ENCODE measurements at regions of chr16 and their contacts with region 1.

Region 1: GRCh38 chr16:3134564-3135417 is at the start of gene ZNF213:
- DNase-seq: peak; percentile 92 to 98 (median 96)
- H3K4me3 ChIP-seq: peak within 1 kb of the TSS; percentile 89 to 97
- H3K4me3 Mint-ChIP-seq: peak within 1 kb of the TSS; percentile 93 to 99 (median 98)
- H3K27ac ChIP-seq: peak within 1 kb of the TSS; percentile 93
- H3K27ac Mint-ChIP-seq: peak within 1 kb of the TSS; percentile 94 to 99 (median 99)
- H3K4me1 ChIP-seq: peaks cover 28% of the 10 kb centered on the region
- H3K4me1 Mint-ChIP-seq: peaks cover 12 to 44% (median 23%) of the 10 kb centered on the region in 4 donors
- H3K27me3 ChIP-seq: no peaks in the 10 kb centered on the region
- H3K27me3 Mint-ChIP-seq: no peaks in the 10 kb centered on the region
- total RNA-seq, gene ZNF213: 14.1 to 14.5 TPM

Region 2: DNA sequence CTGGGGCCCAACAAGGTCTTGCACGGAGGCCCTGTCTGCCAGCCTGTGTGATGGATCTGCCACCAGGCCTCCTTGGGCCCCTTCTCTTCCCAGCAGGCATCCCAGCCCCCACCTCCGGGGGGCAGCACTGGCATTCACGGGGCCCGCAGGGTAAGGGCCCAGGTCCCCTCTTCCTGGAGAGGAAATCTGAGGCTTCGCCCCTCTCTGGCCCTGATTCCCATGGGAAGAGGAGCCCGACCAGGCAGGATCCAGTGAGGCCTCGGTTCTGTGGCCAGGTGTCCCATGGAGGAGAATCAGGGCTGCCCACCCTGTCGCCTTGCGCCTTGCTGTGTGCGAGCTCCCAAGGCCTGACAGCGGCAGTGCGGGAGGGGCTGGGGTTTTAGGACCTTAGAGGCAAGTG is 548.5 kb before region 1 on chr16:
- CTCF ChIA-PET with region 1: no interaction called
- POLR2A ChIA-PET with region 1: no interaction called
- intact Hi-C with region 1: no loop called
- DNase-seq: no peak
- H3K4me3 ChIP-seq: no peak overlapping the region
- H3K4me3 Mint-ChIP-seq: no peak overlapping the region
- H3K27ac ChIP-seq: no peak overlapping the region
- H3K27ac Mint-ChIP-seq: no peak overlapping the region
- H3K4me1 ChIP-seq: no peaks in the 10 kb centered on the region
- H3K4me1 Mint-ChIP-seq: peaks cover 0 to 6% (median 4%) of the 10 kb centered on the region in 4 donors
- H3K27me3 ChIP-seq: no peaks in the 10 kb centered on the region
- H3K27me3 Mint-ChIP-seq: no peaks in the 10 kb centered on the region

Region 3: DNA sequence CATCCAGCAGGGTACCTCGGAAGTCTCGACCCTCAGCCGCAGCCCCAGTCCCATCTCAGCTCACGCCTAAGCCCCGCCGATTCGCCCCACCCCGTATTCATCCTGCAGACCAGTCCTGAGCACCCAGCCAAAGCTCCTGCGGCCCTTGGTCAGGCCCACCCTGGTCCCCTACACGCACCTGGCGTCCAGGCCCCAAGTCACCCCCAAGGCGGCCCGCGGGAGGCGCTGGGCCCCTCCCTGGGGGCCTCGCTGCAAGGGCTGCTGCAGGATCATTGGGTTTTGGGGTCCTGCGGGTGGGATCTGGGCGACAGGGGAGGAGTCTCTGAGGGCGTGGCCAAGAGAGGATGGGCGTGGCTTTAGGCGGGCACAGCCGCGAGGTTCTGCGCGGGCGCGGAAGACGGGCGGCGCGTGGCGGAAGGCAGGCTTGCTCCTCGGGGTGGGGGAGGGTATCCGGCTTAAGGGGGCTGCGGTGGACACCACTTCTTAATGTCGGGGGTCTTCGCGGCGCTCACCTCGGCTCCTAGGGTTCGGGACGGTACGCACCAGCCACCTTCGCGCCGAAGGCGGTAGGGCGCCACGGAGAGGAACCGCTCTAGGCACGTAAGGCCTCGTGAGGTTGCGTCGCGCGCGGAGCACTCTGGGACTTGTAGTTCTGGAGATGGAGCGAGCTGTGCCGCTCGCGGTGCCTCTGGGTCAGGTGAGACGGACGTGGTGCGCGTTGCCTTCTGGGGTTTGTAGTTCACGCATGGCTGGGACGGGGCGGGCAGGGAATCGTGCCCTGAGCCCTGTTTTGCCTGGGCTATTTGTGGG is 110.9 kb before region 1 on chr16 and contains the starts of genes HCFC1R1 and THOC6:
- CTCF ChIA-PET with region 1: interaction called, 277 read pairs
- POLR2A ChIA-PET with region 1: interaction called, 11 read pairs
- intact Hi-C with region 1: no loop called
- DNase-seq: peak; percentile 95 to 97 (median 95)
- H3K4me3 ChIP-seq: peak within 1 kb of the TSS; percentile 38 to 85
- H3K4me3 Mint-ChIP-seq: peak within 1 kb of the TSS; percentile 87 to 97 (median 93)
- H3K27ac ChIP-seq: peak within 1 kb of the TSS; percentile 90
- H3K27ac Mint-ChIP-seq: peak within 1 kb of the TSS; percentile 97 to 99 (median 99)
- H3K4me1 ChIP-seq: peaks cover 56% of the 10 kb centered on the region
- H3K4me1 Mint-ChIP-seq: peaks cover 22 to 67% (median 45%) of the 10 kb centered on the region in 4 donors
- H3K27me3 ChIP-seq: peaks cover 2% of the 10 kb centered on the region
- H3K27me3 Mint-ChIP-seq: no peaks in the 10 kb centered on the region
- total RNA-seq, gene HCFC1R1: 16.0 to 18.0 TPM
- total RNA-seq, gene THOC6: 18.4 to 22.5 TPM

Region 4: DNA sequence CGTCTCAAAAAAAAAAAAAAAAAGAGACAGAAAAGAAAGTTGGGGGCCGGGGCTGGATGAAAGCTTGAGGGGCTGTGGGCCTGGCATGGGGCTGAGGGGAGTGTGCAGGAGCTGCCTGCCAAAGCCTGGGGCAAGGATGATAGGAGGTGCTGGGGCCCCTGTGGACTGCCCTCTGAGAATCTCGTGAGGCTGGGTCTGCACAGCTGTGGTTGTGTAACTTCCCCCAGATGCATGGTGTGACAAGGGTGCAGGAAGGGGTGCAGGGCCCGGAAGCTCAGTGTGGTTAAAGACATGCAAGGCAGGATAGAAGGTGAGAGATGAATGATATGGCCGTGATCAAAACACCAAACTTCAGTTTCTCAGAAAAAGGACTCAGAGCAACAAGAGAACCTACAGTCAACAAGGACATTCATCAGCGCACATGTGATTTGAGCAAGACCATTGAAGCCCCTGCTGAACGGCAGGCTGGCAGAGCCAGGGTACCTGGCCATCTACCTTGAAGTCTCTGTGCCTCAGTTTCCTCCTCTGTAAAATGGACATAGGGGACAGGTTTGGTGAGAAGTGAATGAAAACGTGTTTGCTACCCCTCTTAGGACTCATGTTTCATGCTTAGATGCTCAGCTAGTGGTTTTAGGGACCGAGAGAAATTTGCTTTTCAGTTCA is 59.8 kb before region 1 on chr16:
- CTCF ChIA-PET with region 1: interaction called, 67 read pairs
- POLR2A ChIA-PET with region 1: interaction called, 51 read pairs
- intact Hi-C with region 1: no loop called
- DNase-seq: peak; percentile 90 to 96 (median 91)
- H3K4me3 ChIP-seq: peak overlapping the region; percentile 4 to 29
- H3K4me3 Mint-ChIP-seq: peak overlapping the region; percentile 74 to 87 (median 83)
- H3K27ac ChIP-seq: peak overlapping the region; percentile 77
- H3K27ac Mint-ChIP-seq: peak overlapping the region; percentile 91 to 99 (median 97)
- H3K4me1 ChIP-seq: peaks cover 98% of the 10 kb centered on the region
- H3K4me1 Mint-ChIP-seq: peaks cover 69 to 98% (median 85%) of the 10 kb centered on the region in 4 donors
- H3K27me3 ChIP-seq: no peaks in the 10 kb centered on the region
- H3K27me3 Mint-ChIP-seq: no peaks in the 10 kb centered on the region

Region 5: DNA sequence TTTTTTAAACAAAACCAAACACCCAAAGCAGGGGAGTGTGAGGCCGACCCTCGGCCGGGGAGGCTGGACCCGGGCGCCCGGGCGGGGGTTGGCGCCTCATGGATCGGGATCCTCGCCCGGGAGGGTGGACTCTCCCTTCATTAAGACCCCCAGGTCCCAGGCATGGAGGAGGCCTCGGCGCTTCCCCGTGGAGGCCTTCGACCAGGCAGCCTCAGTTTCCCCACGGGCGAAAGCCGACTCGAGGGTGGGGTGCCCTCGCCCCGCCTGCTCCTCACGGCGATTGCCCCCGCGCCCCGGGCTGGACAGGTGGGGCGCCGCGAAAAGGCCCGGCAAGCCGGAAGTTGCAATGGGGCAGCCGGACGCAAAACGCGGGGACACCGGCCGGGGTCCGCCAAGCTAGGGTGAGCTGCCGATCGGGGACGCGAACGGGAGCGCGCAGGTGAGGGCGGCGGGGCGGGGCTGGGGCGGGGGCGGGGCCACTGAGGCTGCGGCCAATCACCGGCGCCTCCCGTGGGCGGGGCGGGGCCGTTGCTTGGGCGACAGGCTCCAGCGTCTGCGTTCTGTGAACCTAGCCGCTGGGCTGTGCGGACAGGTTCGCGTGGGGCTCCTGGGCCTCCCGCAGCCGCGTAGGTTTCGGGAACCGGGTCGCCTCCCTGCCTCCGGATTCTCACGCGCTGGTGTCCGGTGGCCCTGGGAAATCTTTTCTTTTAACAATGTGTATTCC is 28.4 kb before region 1 on chr16:
- CTCF ChIA-PET with region 1: interaction called, 376 read pairs
- POLR2A ChIA-PET with region 1: interaction called, 146 read pairs
- intact Hi-C with region 1: no loop called
- DNase-seq: peak; percentile 87 to 90 (median 88)
- H3K4me3 ChIP-seq: peak overlapping the region; percentile 38 to 58
- H3K4me3 Mint-ChIP-seq: peak overlapping the region; percentile 78 to 92 (median 88)
- H3K27ac ChIP-seq: peak overlapping the region; percentile 82
- H3K27ac Mint-ChIP-seq: peak overlapping the region; percentile 86 to 95 (median 92)
- H3K4me1 ChIP-seq: peaks cover 37% of the 10 kb centered on the region
- H3K4me1 Mint-ChIP-seq: peaks cover 12 to 41% (median 27%) of the 10 kb centered on the region in 4 donors
- H3K27me3 ChIP-seq: no peaks in the 10 kb centered on the region
- H3K27me3 Mint-ChIP-seq: no peaks in the 10 kb centered on the region

Region 6: GRCh38 chr16:3150346-3151218 is 15.8 kb after region 1 on chr16:
- CTCF ChIA-PET with region 1: interaction called, 44 read pairs
- POLR2A ChIA-PET with region 1: interaction called, 123 read pairs
- intact Hi-C with region 1: loop called (anchors 1 kb)
- DNase-seq: peak; percentile 96 to 99 (median 97)
- H3K4me3 ChIP-seq: peak overlapping the region; percentile 77 to 92
- H3K4me3 Mint-ChIP-seq: peak overlapping the region; percentile 87 to 96 (median 91)
- H3K27ac ChIP-seq: peak overlapping the region; percentile 64
- H3K27ac Mint-ChIP-seq: peak overlapping the region; percentile 87 to 100 (median 95)
- H3K4me1 ChIP-seq: peaks cover 27% of the 10 kb centered on the region
- H3K4me1 Mint-ChIP-seq: peaks cover 22 to 47% (median 26%) of the 10 kb centered on the region in 4 donors
- H3K27me3 ChIP-seq: no peaks in the 10 kb centered on the region
- H3K27me3 Mint-ChIP-seq: peaks cover 3 to 8% of the 10 kb centered on the region in 2 donors

Region 7: DNA sequence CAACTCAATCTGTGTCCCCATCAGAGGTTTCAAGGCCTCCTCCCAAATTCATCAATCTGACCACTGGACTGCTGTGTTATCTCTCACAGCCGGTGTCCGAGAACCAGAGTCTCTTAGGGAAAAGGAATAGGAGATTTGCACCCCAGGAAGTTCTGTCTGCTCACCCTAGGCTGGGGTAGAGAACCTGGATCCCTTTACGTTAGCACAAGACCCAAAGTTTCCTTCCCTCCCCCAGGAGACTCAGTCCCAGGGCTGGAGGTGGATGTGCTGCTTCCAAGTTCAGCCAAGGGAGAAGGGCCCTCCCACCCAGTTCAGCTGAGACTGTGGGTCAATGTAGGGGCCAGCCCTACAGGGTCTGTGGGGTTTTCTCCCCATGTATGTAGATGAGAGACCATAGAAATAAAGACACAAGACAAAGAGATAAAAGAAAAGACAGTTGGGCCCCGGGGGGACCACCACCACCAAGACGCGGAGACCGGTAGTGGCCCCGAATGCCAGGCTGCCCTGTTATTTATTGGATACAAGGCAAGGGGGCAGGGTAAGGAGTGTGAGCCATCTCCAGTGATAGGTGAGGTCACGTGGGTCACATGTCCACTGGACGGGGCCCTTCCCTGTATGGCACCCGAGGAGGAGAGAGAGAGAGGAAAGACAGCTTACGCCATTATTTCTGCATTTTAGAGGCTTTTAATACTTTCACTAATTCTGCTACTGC is 30.5 kb after region 1 on chr16:
- CTCF ChIA-PET with region 1: interaction called, 36 read pairs
- POLR2A ChIA-PET with region 1: interaction called, 72 read pairs
- intact Hi-C with region 1: loop called (anchors 1 kb)
- DNase-seq: no peak
- H3K4me3 ChIP-seq: peak overlapping the region in 1 of 2 donors; percentile 2
- H3K4me3 Mint-ChIP-seq: peak overlapping the region; percentile 38 to 73 (median 58)
- H3K27ac ChIP-seq: peak overlapping the region; percentile 24
- H3K27ac Mint-ChIP-seq: peak overlapping the region in 5 of 7 donors; percentile 29 to 88 (median 70)
- H3K4me1 ChIP-seq: peaks cover 8% of the 10 kb centered on the region
- H3K4me1 Mint-ChIP-seq: peaks cover 4 to 21% (median 11%) of the 10 kb centered on the region in 4 donors
- H3K27me3 ChIP-seq: no peaks in the 10 kb centered on the region
- H3K27me3 Mint-ChIP-seq: no peaks in the 10 kb centered on the region

Region 8: GRCh38 chr16:3242709-3243108 is 107.9 kb after region 1 on chr16:
- CTCF ChIA-PET with region 1: no interaction called
- POLR2A ChIA-PET with region 1: no interaction called
- intact Hi-C with region 1: no loop called
- DNase-seq: no peak
- H3K4me3 ChIP-seq: no peak overlapping the region
- H3K4me3 Mint-ChIP-seq: no peak overlapping the region
- H3K27ac ChIP-seq: no peak overlapping the region
- H3K27ac Mint-ChIP-seq: no peak overlapping the region
- H3K4me1 ChIP-seq: no peaks in the 10 kb centered on the region
- H3K4me1 Mint-ChIP-seq: no peaks in the 10 kb centered on the region
- H3K27me3 ChIP-seq: no peaks in the 10 kb centered on the region
- H3K27me3 Mint-ChIP-seq: peaks cover 2 to 4% of the 10 kb centered on the region in 2 donors

Region 9: GRCh38 chr16:3264137-3265036 is 129.6 kb after region 1 on chr16:
- CTCF ChIA-PET with region 1: interaction called, 3 read pairs
- POLR2A ChIA-PET with region 1: interaction called, 13 read pairs
- intact Hi-C with region 1: no loop called
- DNase-seq: peak; percentile 93 to 96 (median 95)
- H3K4me3 ChIP-seq: peak overlapping the region; percentile 12 to 95
- H3K4me3 Mint-ChIP-seq: peak overlapping the region; percentile 88 to 98 (median 90)
- H3K27ac ChIP-seq: peak overlapping the region; percentile 92
- H3K27ac Mint-ChIP-seq: peak overlapping the region; percentile 90 to 96 (median 93)
- H3K4me1 ChIP-seq: peaks cover 25% of the 10 kb centered on the region
- H3K4me1 Mint-ChIP-seq: peaks cover 23 to 46% (median 33%) of the 10 kb centered on the region in 4 donors
- H3K27me3 ChIP-seq: no peaks in the 10 kb centered on the region
- H3K27me3 Mint-ChIP-seq: no peaks in the 10 kb centered on the region

Region 10: GRCh38 chr16:3328643-3329042 is 193.9 kb after region 1 on chr16:
- CTCF ChIA-PET with region 1: no interaction called
- POLR2A ChIA-PET with region 1: no interaction called
- intact Hi-C with region 1: no loop called
- DNase-seq: no peak
- H3K4me3 ChIP-seq: no peak overlapping the region
- H3K4me3 Mint-ChIP-seq: no peak overlapping the region
- H3K27ac ChIP-seq: no peak overlapping the region
- H3K27ac Mint-ChIP-seq: no peak overlapping the region
- H3K4me1 ChIP-seq: no peaks in the 10 kb centered on the region
- H3K4me1 Mint-ChIP-seq: no peaks in the 10 kb centered on the region
- H3K27me3 ChIP-seq: no peaks in the 10 kb centered on the region
- H3K27me3 Mint-ChIP-seq: no peaks in the 10 kb centered on the region